WTC11 (cell line): ENCODE measurements at regions of chr6 and their contacts with region 1.

Region 1: GRCh38 chr6:154868143-154868594 is 126.9 kb upstream of the TIAM2 start:
- DNase-seq: no peak
- ATAC-seq: no peak
- H3K4me3 Mint-ChIP-seq: no peak overlapping the region
- H3K27ac Mint-ChIP-seq: no peak overlapping the region
- H3K4me1 Mint-ChIP-seq: peaks cover 18% of the 10 kb centered on the region
- H3K27me3 Mint-ChIP-seq: no peaks in the 10 kb centered on the region
- CTCF ChIP-seq: peak; percentile 63

Region 2: DNA sequence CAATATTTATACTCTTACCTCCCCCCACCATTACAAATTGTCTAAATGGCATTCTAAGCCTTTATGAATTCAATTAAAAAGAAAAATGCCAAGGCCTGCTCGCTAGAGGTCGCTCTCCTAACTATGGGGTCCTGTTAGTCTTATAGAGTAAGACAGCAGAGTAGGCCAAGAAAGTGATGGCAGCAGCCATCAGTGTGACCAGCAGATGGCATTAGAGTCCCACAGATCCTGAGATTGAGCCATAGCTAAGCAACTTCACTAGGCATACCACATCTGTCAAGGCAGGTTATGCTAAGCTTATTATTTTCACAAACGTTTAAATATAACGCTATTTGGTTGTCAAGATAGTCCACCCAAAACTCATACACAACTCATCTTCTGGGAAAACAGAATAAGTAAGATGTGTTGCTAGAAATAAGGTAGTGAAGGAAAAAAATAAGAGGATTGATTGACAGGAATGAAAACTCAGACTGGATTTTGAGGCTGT is 192.5 kb before region 1 on chr6:
- CTCF ChIA-PET with region 1: interaction called, 12 read pairs
- POLR2A ChIA-PET with region 1: no interaction called
- DNase-seq: peak; percentile 86
- ATAC-seq: peak; percentile 98
- H3K4me3 Mint-ChIP-seq: no peak overlapping the region
- H3K27ac Mint-ChIP-seq: no peak overlapping the region
- H3K4me1 Mint-ChIP-seq: no peaks in the 10 kb centered on the region
- H3K27me3 Mint-ChIP-seq: no peaks in the 10 kb centered on the region
- CTCF ChIP-seq: peak; percentile 89

Region 3: GRCh38 chr6:154773610-154774089 is 94.5 kb before region 1 on chr6:
- CTCF ChIA-PET with region 1: no interaction called
- POLR2A ChIA-PET with region 1: no interaction called
- DNase-seq: no peak
- ATAC-seq: no peak
- H3K4me3 Mint-ChIP-seq: no peak overlapping the region
- H3K27ac Mint-ChIP-seq: no peak overlapping the region; the same call in 1 of the 2 replicates
- H3K4me1 Mint-ChIP-seq: peaks cover 13% of the 10 kb centered on the region
- H3K27me3 Mint-ChIP-seq: no peaks in the 10 kb centered on the region
- CTCF ChIP-seq: no peak

Region 4: GRCh38 chr6:154909821-154910220 is 41.7 kb after region 1 on chr6:
- CTCF ChIA-PET with region 1: interaction called, 13 read pairs
- POLR2A ChIA-PET with region 1: no interaction called
- DNase-seq: no peak
- ATAC-seq: peak; percentile 68
- H3K4me3 Mint-ChIP-seq: no peak overlapping the region
- H3K27ac Mint-ChIP-seq: peak overlapping the region; percentile 71
- H3K4me1 Mint-ChIP-seq: peaks cover 14% of the 10 kb centered on the region
- H3K27me3 Mint-ChIP-seq: no peaks in the 10 kb centered on the region
- CTCF ChIP-seq: no peak

Region 5: GRCh38 chr6:154923199-154923869 is 55.2 kb after region 1 on chr6:
- CTCF ChIA-PET with region 1: interaction called, 13 read pairs
- POLR2A ChIA-PET with region 1: no interaction called
- DNase-seq: peak; percentile 54
- ATAC-seq: peak; percentile 57
- H3K4me3 Mint-ChIP-seq: no peak overlapping the region
- H3K27ac Mint-ChIP-seq: no peak overlapping the region
- H3K4me1 Mint-ChIP-seq: peaks cover 13% of the 10 kb centered on the region
- H3K27me3 Mint-ChIP-seq: no peaks in the 10 kb centered on the region
- CTCF ChIP-seq: no peak

Region 6: GRCh38 chr6:154928325-154928922 is 60.3 kb after region 1 on chr6:
- CTCF ChIA-PET with region 1: interaction called, 13 read pairs
- POLR2A ChIA-PET with region 1: no interaction called
- DNase-seq: peak; percentile 66
- ATAC-seq: peak; percentile 55
- H3K4me3 Mint-ChIP-seq: no peak overlapping the region
- H3K27ac Mint-ChIP-seq: no peak overlapping the region
- H3K4me1 Mint-ChIP-seq: peaks cover 30% of the 10 kb centered on the region
- H3K27me3 Mint-ChIP-seq: no peaks in the 10 kb centered on the region
- CTCF ChIP-seq: peak; percentile 72; the same call in 1 of the 2 replicates

Region 7: GRCh38 chr6:154956771-154957522 is 88.8 kb after region 1 on chr6:
- CTCF ChIA-PET with region 1: interaction called, 14 read pairs
- POLR2A ChIA-PET with region 1: no interaction called
- DNase-seq: peak; percentile 28
- ATAC-seq: peak; percentile 78
- H3K4me3 Mint-ChIP-seq: no peak overlapping the region
- H3K27ac Mint-ChIP-seq: no peak overlapping the region; the same call in 1 of the 2 replicates
- H3K4me1 Mint-ChIP-seq: peaks cover 14% of the 10 kb centered on the region
- H3K27me3 Mint-ChIP-seq: no peaks in the 10 kb centered on the region
- CTCF ChIP-seq: no peak

Region 8: DNA sequence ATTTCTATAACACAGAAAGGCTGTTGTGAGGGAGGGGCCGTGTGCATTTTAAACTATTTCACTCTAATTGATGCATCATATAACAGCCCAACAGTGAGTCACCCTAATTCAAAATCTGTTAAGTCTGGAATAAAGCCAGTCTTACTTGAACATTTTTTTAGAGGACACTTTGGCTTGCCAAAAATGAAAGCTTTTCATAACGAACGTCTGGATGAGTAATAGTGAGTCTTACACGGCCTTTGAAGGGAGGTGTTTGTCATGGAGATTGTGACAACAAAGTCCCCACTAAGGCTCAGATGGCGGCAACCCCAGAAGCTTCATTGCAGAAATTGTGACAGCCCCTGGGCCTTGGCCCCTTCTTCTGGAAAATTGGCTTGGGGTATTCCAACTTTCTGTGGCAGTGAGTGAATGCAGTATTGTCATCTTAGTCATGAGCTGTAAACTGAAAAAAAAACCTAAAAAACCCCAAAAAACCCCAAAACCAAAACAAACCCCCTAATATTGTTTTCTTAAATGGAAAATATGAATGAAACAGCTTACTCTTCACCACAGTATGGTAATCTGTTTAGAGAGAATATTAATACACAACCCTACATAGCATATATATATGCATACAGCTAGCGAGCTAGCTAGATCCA is 303.1 kb after region 1 on chr6:
- CTCF ChIA-PET with region 1: interaction called, 10 read pairs
- POLR2A ChIA-PET with region 1: no interaction called
- DNase-seq: no peak
- ATAC-seq: no peak
- H3K4me3 Mint-ChIP-seq: no peak overlapping the region
- H3K27ac Mint-ChIP-seq: peak overlapping the region; percentile 69; the same call in 1 of the 2 replicates
- H3K4me1 Mint-ChIP-seq: peaks cover 33% of the 10 kb centered on the region
- H3K27me3 Mint-ChIP-seq: no peaks in the 10 kb centered on the region
- CTCF ChIP-seq: no peak